ENCODE measurements at regions of chr9 and their contacts with region 1.

Region 1: DNA sequence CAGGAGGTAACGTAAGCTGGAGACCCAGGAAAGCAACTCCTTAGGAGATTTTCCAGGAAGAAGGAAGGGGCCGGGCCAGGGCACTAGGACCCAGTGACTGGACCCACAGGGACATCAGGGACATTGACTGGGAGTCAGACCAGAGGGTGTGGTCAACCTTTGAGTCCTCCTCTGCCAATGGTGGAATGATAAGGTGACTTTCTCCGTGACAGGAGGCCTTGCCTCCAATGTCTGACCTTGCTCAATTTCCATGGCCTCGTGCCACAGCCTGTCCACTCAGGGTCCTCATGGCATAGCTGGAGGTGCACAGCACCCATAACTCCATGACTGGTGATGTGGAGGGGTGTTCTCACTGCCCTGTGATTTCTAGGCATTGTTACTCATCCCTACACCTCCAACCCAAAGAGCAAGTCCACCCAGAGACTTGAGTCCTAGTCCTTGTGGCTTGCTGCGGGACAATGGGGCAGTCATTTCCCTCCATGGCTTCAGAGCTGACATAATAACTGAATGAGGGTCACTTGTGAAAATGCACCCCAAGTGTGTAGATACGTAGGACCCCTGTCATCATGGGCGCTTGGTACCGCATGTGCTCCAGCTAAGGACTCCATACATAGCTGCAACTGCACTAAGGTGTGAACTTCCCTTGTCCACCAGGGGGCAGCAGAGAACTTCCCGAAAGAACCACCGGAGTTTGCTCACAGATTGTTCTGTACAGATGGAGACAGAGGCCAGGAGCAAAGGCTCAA is 4.1 kb upstream of the AMBP start:
- DNase-seq: peak; percentile 90 to 92
- H3K4me3 ChIP-seq: no peak overlapping the region
- H3K27ac ChIP-seq: no peak overlapping the region
- H3K4me1 ChIP-seq: peaks cover 0 to 13% (median 2%) of the 10 kb centered on the region in 4 donors
- H3K27me3 ChIP-seq: no peaks in the 10 kb centered on the region
- CTCF ChIP-seq: peak; percentile 90 to 93

Region 2: DNA sequence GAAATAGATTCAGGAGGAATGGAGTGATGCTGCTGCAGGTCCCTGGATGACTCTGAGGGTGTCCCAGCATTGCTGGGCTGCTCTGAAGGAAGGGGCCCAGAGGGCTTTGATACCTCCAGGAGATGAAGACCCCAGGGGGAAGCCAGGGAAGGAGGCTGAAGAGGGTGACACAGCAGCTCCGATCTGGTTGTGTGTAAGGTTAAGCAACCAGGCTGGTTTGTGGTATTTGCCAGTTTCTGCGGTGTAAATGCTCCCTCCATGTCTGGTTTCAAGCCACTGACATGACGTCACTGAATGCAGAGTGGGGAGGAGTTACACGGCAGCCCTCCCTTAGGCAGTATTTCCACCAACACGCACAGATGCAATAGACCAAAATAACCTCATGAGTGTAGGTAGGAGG is 200.7 kb after region 1 on chr9:
- intact Hi-C with region 1: loop called (anchors 10 kb)
- DNase-seq: peak in 1 of 2 donors; percentile 40
- H3K4me3 ChIP-seq: no peak overlapping the region
- H3K27ac ChIP-seq: no peak overlapping the region
- H3K4me1 ChIP-seq: peaks cover 0 to 21% (median 5%) of the 10 kb centered on the region in 4 donors
- H3K27me3 ChIP-seq: no peaks in the 10 kb centered on the region
- CTCF ChIP-seq: no peak

Measured in tibial artery (tissue), 4 donors.